SK-N-SH (cell line): ENCODE measurements at regions of chr6 and their contacts with region 1.

Region 1: GRCh38 chr6:37018198-37019064 is 13.0 kb downstream of the FGD2 start:
- DNase-seq: peak; percentile 89
- H3K4me3 ChIP-seq: no peak overlapping the region; a peak in 1 of 4 replicates
- H3K27ac ChIP-seq: peak overlapping the region in 1 of 2 experiments; percentile 59; a peak in 3 of 4 replicates
- H3K4me1 ChIP-seq: peaks cover 0 to 19% of the 10 kb centered on the region in 2 experiments; a peak in 1 of 4 replicates
- H3K27me3 ChIP-seq: no peaks in the 10 kb centered on the region
- CTCF ChIP-seq: peak; percentile 92
- EP300 ChIP-seq: peak in 1 of 2 experiments; percentile 11; a peak in 1 of 4 replicates
- RAD21 ChIP-seq: peak; percentile 94

Region 2: GRCh38 chr6:36765594-36766398 is 252.6 kb before region 1 on chr6:
- CTCF ChIA-PET with region 1: interaction called, 79 read pairs
- POLR2A ChIA-PET with region 1: interaction called, 4 read pairs
- DNase-seq: peak; percentile 90
- H3K4me3 ChIP-seq: peak overlapping the region in 1 of 2 experiments; percentile 46; a peak in 1 of 4 replicates
- H3K27ac ChIP-seq: no peak overlapping the region
- H3K4me1 ChIP-seq: peaks cover 13 to 14% of the 10 kb centered on the region in 2 experiments; a peak in 3 of 4 replicates
- H3K27me3 ChIP-seq: no peaks in the 10 kb centered on the region
- CTCF ChIP-seq: peak; percentile 87
- EP300 ChIP-seq: no peak
- RAD21 ChIP-seq: peak; percentile 98

Region 3: DNA sequence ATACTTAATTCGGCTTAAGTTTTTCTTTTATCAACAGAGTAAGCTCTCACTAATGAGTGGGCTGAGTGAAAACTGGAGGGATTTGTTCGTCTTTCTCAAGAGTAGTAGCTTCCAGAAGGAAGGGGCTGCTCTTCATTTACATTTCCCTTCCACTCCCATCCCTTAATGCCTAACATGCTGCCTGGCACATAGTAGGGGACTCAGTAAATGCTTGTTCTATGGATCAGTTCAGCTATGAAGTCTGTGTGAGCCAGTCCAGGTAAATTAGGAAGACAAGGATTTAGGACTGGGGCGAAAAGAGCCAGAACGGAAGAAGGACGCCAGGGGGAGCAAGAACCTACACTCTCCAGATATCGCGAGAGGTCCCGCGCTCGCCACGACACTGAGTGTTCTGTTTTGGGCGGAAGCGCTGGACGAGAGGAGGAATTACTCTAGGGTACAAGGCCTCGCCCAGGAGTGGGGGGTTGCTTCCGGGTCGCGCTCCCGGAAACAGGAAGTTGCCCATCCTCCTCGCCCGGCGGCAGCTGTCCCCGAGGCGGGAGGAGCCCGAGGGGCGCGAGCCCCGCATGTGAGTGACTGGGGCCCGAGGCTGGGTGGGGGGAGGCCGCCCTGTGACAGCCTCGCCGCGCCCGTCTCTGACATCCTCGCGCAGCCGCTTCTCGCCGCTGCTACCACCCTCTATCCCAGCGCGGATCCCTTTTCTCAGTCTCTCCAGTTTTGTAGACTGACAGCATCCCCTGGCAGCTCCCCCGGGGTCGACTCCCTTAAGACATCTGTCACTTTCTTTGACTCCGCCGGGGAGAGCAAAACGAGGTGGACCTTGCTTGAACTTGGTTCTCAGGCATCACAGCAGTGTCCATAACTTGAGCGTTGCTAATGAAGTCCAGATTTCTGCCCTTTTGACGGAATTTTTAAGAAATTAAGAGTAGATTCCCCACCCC is 132.7 kb before region 1 on chr6 and contains the start of gene C6orf89:
- CTCF ChIA-PET with region 1: interaction called, 74 read pairs
- POLR2A ChIA-PET with region 1: interaction called, 11 read pairs
- DNase-seq: peak; percentile 94
- H3K4me3 ChIP-seq: peak within 1 kb of the TSS; percentile 90 to 96
- H3K27ac ChIP-seq: peak within 1 kb of the TSS; percentile 73 to 84
- H3K4me1 ChIP-seq: peaks cover 0 to 5% of the 10 kb centered on the region in 2 experiments; a peak in 1 of 4 replicates
- H3K27me3 ChIP-seq: no peaks in the 10 kb centered on the region
- CTCF ChIP-seq: peak; percentile 79
- EP300 ChIP-seq: peak in 1 of 2 experiments; percentile 36; a peak in 1 of 4 replicates
- RAD21 ChIP-seq: peak; percentile 58
- polyA plus RNA-seq, gene C6orf89: 20.4 and 29.8 TPM in 2 replicates

Region 4: DNA sequence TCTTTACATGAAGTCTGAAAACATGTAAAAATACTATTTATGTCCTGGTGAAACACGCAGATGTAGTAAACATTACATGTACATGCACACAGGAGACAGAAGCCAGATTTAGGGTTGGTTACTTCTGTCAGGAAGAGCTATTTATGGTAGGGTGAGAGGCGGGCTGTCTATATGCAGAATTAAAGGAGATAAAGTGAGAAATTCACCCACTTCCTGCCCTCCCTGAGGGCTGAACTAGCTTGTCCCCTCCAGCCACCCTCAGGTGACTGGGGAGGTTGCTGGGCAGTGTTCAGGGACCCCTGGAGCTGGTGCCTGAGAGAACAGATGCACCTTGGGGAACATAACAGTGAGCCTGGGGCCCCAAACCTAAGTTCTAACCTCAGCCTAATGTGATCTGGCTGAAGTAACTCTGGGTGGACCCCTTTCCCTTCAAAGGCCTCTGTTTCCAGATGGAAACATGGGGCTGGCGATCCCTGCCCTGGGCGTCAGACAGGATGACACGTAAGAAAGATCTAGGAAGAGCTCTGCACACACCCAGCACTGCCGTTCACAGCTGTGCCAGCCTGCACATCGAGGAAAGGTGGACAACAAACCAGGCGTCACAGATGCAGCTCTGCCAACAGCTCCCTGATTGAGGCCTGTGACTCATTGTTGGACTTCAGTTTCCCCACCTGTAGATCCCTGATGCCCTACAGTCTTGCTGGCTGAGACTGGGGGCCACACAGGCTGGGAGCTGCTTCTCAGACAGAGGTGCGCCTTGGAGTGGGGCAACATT is 62.6 kb before region 1 on chr6:
- CTCF ChIA-PET with region 1: interaction called, 10 read pairs
- POLR2A ChIA-PET with region 1: no interaction called
- DNase-seq: no peak
- H3K4me3 ChIP-seq: no peak overlapping the region
- H3K27ac ChIP-seq: no peak overlapping the region
- H3K4me1 ChIP-seq: peaks cover 0 to 2% of the 10 kb centered on the region in 2 experiments; a peak in 1 of 4 replicates
- H3K27me3 ChIP-seq: no peaks in the 10 kb centered on the region
- CTCF ChIP-seq: no peak
- EP300 ChIP-seq: no peak
- RAD21 ChIP-seq: no peak

Region 5: GRCh38 chr6:36997811-36998722 is 20.4 kb before region 1 on chr6:
- CTCF ChIA-PET with region 1: interaction called, 78 read pairs
- POLR2A ChIA-PET with region 1: no interaction called
- DNase-seq: peak; percentile 52
- H3K4me3 ChIP-seq: no peak overlapping the region
- H3K27ac ChIP-seq: no peak overlapping the region
- H3K4me1 ChIP-seq: peaks cover 0 to 10% of the 10 kb centered on the region in 2 experiments; a peak in 1 of 4 replicates
- H3K27me3 ChIP-seq: no peaks in the 10 kb centered on the region; the same call in 1 of the 2 replicates
- CTCF ChIP-seq: no peak
- EP300 ChIP-seq: no peak
- RAD21 ChIP-seq: no peak

Region 6: DNA sequence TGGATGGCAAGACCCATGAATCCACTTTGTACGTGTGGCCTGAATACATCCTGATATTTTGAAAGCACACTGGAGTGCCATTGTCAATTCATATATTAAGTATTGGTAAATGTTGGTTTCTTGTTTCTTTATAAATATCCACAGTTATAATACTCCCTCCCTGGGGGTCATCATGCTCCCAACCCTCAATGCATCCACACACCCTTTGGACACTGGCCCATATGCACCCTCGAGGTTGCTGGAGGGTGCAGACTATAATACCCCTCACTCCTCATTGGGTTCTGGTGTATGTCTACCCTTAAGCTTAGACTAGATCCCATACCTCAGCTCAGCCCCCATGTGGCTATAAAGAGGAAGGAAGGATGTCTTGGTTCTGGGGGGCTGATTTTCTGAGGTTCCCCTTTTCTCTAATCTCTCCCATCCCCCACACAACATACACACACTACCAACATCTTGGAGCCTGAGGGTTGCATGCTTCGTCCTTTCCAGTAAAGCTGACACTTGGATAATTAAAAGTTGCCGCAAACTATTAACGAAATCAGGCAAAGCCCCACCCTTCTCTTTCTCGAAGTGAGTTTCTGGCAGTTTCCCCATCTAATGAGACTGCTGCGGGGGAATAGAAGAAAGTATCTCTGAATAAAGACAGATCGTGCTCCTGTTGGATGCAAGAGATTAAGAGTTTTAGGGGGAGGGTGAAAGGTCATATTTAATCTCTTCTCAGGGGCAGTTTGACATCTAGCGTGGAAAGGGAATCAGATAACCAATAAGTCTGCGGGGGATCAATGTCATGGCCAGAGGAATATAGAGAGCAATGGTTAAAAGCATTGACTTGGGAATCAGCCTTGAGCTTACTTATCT is 158.9 kb after region 1 on chr6:
- CTCF ChIA-PET with region 1: interaction called, 418 read pairs
- POLR2A ChIA-PET with region 1: no interaction called
- DNase-seq: no peak
- H3K4me3 ChIP-seq: no peak overlapping the region
- H3K27ac ChIP-seq: no peak overlapping the region
- H3K4me1 ChIP-seq: peaks cover 3 to 8% of the 10 kb centered on the region in 2 experiments; a peak in 2 of 4 replicates
- H3K27me3 ChIP-seq: no peaks in the 10 kb centered on the region
- CTCF ChIP-seq: no peak
- EP300 ChIP-seq: no peak
- RAD21 ChIP-seq: no peak

Region 7: GRCh38 chr6:37222125-37222967 is 203.9 kb after region 1 on chr6:
- CTCF ChIA-PET with region 1: interaction called, 431 read pairs
- POLR2A ChIA-PET with region 1: interaction called, 4 read pairs
- DNase-seq: peak; percentile 90
- H3K4me3 ChIP-seq: peak overlapping the region; percentile 62 to 65
- H3K27ac ChIP-seq: peak overlapping the region; percentile 37 to 93; a peak in 3 of 4 replicates
- H3K4me1 ChIP-seq: peaks cover 6% of the 10 kb centered on the region in 2 experiments; a peak in 2 of 4 replicates
- H3K27me3 ChIP-seq: no peaks in the 10 kb centered on the region
- CTCF ChIP-seq: no peak
- EP300 ChIP-seq: no peak
- RAD21 ChIP-seq: no peak